K562 (cell line): ENCODE measurements at regions of chr2 and their contacts with region 1.

Region 1: GRCh38 chr2:105789745-105790460 is 45.2 kb downstream of the NCK2 start:
- DNase-seq: no peak
- ATAC-seq: no peak
- H3K4me3 ChIP-seq: no peak overlapping the region
- H3K27ac ChIP-seq: no peak overlapping the region
- H3K4me1 ChIP-seq: peaks cover 20 to 31% of the 10 kb centered on the region in 2 experiments
- H3K27me3 ChIP-seq: no peaks in the 10 kb centered on the region
- CTCF ChIP-seq: peak; percentile 1 to 39 (median 23); a peak in 3 of 6 replicates
- EP300 ChIP-seq: no peak
- POLR2A ChIP-seq: no peak
- RAD21 ChIP-seq: peak in 1 of 2 experiments; percentile 22; a peak in 2 of 4 replicates

Region 2: GRCh38 chr2:105344704-105345345 is 445.1 kb before region 1 on chr2:
- CTCF ChIA-PET with region 1: no interaction called
- POLR2A ChIA-PET with region 1: no interaction called
- in situ Hi-C with region 1: loop called (anchors 10 kb)
- intact Hi-C with region 1: no loop called
- DNase-seq: peak in 1 of 4 experiments; percentile 33
- ATAC-seq: peak; percentile 57; the same call in 2 of the 3 replicates
- H3K4me3 ChIP-seq: no peak overlapping the region
- H3K27ac ChIP-seq: no peak overlapping the region
- H3K4me1 ChIP-seq: no peaks in the 10 kb centered on the region
- H3K27me3 ChIP-seq: no peaks in the 10 kb centered on the region
- CTCF ChIP-seq: peak in 2 of 3 experiments; percentile 13 to 54; a peak in 3 of 6 replicates
- EP300 ChIP-seq: no peak
- POLR2A ChIP-seq: no peak
- RAD21 ChIP-seq: peak; percentile 35 to 49

Region 3: GRCh38 chr2:105744091-105744908 is 45.6 kb before region 1 on chr2:
- CTCF ChIA-PET with region 1: no interaction called
- POLR2A ChIA-PET with region 1: no interaction called
- in situ Hi-C with region 1: no loop called
- intact Hi-C with region 1: no loop called
- DNase-seq: peak; percentile 75 to 93 (median 89)
- ATAC-seq: peak; percentile 91
- H3K4me3 ChIP-seq: peak overlapping the region; percentile 62
- H3K27ac ChIP-seq: peak overlapping the region; percentile 51; the same call in 1 of the 3 replicates
- H3K4me1 ChIP-seq: peaks cover 12 to 13% of the 10 kb centered on the region in 2 experiments
- H3K27me3 ChIP-seq: no peaks in the 10 kb centered on the region
- CTCF ChIP-seq: no peak
- EP300 ChIP-seq: no peak
- POLR2A ChIP-seq: no peak
- RAD21 ChIP-seq: no peak

Region 4: GRCh38 chr2:105761931-105762515 is 27.9 kb before region 1 on chr2:
- CTCF ChIA-PET with region 1: no interaction called
- POLR2A ChIA-PET with region 1: no interaction called
- in situ Hi-C with region 1: no loop called
- intact Hi-C with region 1: no loop called
- DNase-seq: no peak
- ATAC-seq: no peak
- H3K4me3 ChIP-seq: no peak overlapping the region
- H3K27ac ChIP-seq: no peak overlapping the region
- H3K4me1 ChIP-seq: peaks cover 0 to 5% of the 10 kb centered on the region in 2 experiments; a peak in 2 of 5 replicates
- H3K27me3 ChIP-seq: no peaks in the 10 kb centered on the region
- CTCF ChIP-seq: no peak
- EP300 ChIP-seq: no peak
- POLR2A ChIP-seq: no peak
- RAD21 ChIP-seq: no peak

Region 5: DNA sequence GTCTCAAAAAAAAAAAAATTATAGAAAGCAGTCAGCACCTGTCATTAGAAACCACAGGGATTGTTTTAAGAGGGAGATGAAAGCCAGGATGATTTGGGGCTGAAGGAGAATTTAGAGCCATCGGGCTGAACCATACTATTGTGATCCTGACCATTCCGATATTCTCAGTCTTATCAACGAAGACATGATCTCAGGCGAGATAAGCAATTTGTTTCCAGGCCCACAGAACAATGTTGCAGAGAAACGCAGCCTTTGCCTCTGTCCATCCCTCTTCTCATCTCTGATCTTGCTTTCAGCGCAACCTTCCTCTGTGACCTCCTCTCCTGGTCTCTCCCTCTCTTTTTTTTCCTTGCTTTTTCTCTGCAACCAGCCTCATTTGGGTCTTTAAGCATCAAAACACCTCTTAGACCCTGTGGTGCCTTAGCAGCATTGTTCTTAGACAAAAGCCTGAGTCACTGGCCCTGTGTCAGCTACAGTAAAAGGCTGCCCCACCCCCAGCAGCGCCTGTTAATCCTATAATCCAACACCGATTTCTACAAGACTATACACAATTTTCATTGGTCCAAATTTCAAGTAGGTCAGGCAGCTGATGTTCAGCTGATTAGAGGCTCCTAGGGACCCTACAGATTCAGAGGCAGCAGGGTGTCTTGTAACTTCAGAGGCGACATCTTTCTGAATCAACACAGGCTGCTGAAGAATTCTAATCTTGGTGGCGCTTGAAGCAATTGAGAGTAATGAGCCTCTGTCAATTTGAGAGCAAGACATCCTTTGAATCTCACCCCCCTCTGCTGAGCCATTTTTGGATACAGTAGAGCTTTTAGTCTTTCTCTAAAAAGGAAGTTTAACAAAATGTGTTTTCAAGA is 160.8 kb after region 1 on chr2:
- CTCF ChIA-PET with region 1: no interaction called
- POLR2A ChIA-PET with region 1: no interaction called
- in situ Hi-C with region 1: no loop called
- intact Hi-C with region 1: no loop called
- DNase-seq: peak in 1 of 4 experiments; percentile 10
- ATAC-seq: peak; percentile 41; the same call in 1 of the 3 replicates
- H3K4me3 ChIP-seq: no peak overlapping the region
- H3K27ac ChIP-seq: no peak overlapping the region
- H3K4me1 ChIP-seq: no peaks in the 10 kb centered on the region; a peak in 1 of 5 replicates
- H3K27me3 ChIP-seq: peaks cover 4 to 38% of the 10 kb centered on the region in 2 experiments
- CTCF ChIP-seq: no peak
- EP300 ChIP-seq: no peak
- POLR2A ChIP-seq: no peak
- RAD21 ChIP-seq: no peak

Region 6: DNA sequence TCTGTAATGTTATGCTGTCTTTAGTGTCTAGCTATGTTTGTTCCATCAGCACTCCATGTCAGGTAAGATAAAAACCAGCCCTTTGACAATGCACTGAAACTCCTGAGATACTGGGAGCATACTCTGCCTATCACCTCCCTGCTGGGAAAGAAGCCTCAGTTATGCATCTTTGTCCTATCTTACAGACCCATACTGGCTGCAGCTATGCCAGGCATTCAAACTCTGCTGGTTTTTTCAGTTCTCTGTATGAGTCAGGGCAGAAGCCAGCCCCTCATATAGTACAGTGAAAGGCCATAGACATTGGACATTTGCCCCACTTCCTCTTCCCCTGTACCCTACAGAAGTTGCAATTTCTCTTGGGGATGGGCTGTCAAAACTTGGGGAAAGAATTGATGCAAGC is 1855.7 kb after region 1 on chr2:
- CTCF ChIA-PET with region 1: no interaction called
- POLR2A ChIA-PET with region 1: no interaction called
- in situ Hi-C with region 1: no loop called
- intact Hi-C with region 1: no loop called
- DNase-seq: no peak
- ATAC-seq: no peak
- H3K4me3 ChIP-seq: no peak overlapping the region
- H3K27ac ChIP-seq: no peak overlapping the region
- H3K4me1 ChIP-seq: no peaks in the 10 kb centered on the region
- H3K27me3 ChIP-seq: no peaks in the 10 kb centered on the region
- CTCF ChIP-seq: no peak
- EP300 ChIP-seq: no peak
- POLR2A ChIP-seq: no peak
- RAD21 ChIP-seq: no peak